Right cardiac atrium (tissue), 5 donors: ENCODE measurements at regions of chr22 and their contacts with region 1.

Region 1: DNA sequence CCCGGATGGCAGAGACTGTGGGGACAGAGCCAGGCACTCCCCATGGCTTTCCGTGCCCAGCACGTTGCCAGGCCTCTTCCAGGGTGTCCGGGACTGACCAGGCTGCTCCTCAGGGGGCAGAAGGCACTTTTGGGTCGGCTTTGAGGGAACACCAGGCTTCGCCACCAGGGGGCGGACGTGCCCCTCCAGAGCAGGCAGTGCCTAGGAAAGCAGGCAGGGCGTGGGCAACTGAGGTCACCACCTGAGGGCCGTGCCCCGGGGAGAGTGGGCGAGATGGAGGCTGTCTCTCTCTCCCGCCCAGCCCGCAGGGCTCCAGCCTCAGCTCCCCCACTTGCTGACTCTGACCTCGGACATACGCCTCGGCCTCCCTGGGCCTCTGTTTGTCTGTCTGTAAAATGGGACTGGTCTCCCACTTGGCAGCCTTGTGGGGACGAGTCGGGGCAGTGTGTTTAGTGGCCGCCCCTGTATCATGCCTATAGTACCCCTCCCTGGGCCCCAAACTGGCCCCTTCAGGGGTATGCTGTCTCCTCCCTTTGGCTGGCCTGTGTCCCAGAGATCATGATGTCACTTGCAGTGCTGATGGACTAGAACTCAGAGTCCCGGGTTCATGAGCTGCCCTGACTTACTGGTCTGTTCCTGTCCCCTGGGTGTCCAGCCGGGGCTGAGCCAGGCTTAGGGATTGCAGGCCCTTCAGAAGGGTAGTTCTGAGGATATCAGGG is 4.4 kb upstream of the PRR5 start:
- DNase-seq: peak; percentile 84 to 95 (median 93)
- ATAC-seq: peak; percentile 43 to 65
- H3K4me3 ChIP-seq: no peak overlapping the region
- H3K27ac ChIP-seq: no peak overlapping the region
- H3K4me1 ChIP-seq: no peaks in the 10 kb centered on the region
- H3K27me3 ChIP-seq: no peaks in the 10 kb centered on the region

Region 2: GRCh38 chr22:44735540-44736488 is 38.2 kb after region 1 on chr22:
- intact Hi-C with region 1: loop called (anchors 1 to 2 kb)
- DNase-seq: peak; percentile 75 to 93 (median 91)
- ATAC-seq: peak; percentile 42 to 55
- H3K4me3 ChIP-seq: no peak overlapping the region
- H3K27ac ChIP-seq: no peak overlapping the region
- H3K4me1 ChIP-seq: no peaks in the 10 kb centered on the region
- H3K27me3 ChIP-seq: no peaks in the 10 kb centered on the region